AG04450 (cell line): ENCODE measurements at regions of chr17 and their contacts with region 1.

Region 1: GRCh38 chr17:75109407-75110233 is at the start of gene ARMC7:
- DNase-seq: peak; percentile 49
- H3K4me3 ChIP-seq: peak within 1 kb of the TSS; percentile 80
- H3K27ac ChIP-seq: no peak within 1 kb of the TSS
- H3K27me3 ChIP-seq: peaks cover 7% of the 10 kb centered on the region
- CTCF ChIP-seq: no peak
- polyA plus RNA-seq, gene ARMC7: 5.6 and 6.5 TPM in 2 replicates

Region 2: GRCh38 chr17:75059369-75060345 is 50.0 kb before region 1 on chr17:
- CTCF ChIA-PET with region 1: interaction called, 54 read pairs
- POLR2A ChIA-PET with region 1: interaction called, 6 read pairs
- DNase-seq: peak; percentile 54
- H3K4me3 ChIP-seq: no peak overlapping the region
- H3K27ac ChIP-seq: no peak overlapping the region
- H3K27me3 ChIP-seq: no peaks in the 10 kb centered on the region
- CTCF ChIP-seq: peak; percentile 65

Region 3: GRCh38 chr17:75077496-75078283 is 31.9 kb before region 1 on chr17:
- CTCF ChIA-PET with region 1: interaction called, 13 read pairs
- POLR2A ChIA-PET with region 1: interaction called, 5 read pairs
- DNase-seq: no peak
- H3K4me3 ChIP-seq: no peak overlapping the region
- H3K27ac ChIP-seq: no peak overlapping the region
- H3K27me3 ChIP-seq: no peaks in the 10 kb centered on the region
- CTCF ChIP-seq: peak; percentile 3; the same call in 1 of the 2 replicates

Region 4: DNA sequence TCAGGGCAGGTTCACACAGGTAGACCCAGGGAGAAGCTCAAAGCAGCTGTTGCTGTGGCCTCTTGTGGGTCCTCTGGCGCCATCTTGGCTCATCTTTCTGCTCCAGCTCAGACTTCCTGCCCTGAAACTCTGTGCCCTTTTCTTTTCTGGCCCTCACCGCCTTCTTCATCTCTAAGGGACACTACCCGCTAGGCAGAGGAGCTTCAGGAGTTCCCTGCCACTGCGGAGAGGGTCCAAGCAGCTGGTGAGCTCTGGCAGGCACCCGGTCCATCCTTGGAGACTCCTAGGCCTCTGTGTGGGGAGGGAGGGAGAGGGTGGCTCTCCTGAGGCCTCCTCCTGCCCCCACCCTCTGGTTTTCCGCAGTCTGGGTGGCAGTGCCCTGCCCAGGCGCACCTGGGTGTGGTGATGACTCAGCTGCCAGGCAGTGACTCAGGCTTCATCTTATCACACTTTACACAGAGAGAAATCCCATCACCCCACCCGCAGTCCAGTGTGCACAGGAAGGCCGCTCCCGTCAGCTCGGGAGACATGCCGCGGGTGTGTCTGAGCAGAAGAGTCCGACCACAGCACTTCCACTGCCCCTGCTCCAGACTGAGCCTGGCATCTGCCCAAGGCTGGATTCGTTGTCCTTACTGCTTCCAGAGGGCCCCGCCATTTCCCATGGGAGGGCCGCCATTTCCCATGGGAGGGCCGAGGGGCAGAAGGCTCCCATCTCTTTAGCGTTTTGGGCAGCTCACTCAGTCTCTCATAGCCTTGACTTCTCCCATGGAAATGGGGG is 14.6 kb after region 1 on chr17:
- CTCF ChIA-PET with region 1: interaction called, 67 read pairs
- POLR2A ChIA-PET with region 1: interaction called, 4 read pairs
- DNase-seq: no peak
- H3K4me3 ChIP-seq: no peak overlapping the region
- H3K27ac ChIP-seq: peak overlapping the region; percentile 11
- H3K27me3 ChIP-seq: no peaks in the 10 kb centered on the region
- CTCF ChIP-seq: no peak

Region 5: GRCh38 chr17:75151930-75152329 is 42.3 kb after region 1 on chr17:
- CTCF ChIA-PET with region 1: interaction called, 15 read pairs
- POLR2A ChIA-PET with region 1: interaction called, 7 read pairs
- DNase-seq: no peak
- H3K4me3 ChIP-seq: peak overlapping the region; percentile 94
- H3K27ac ChIP-seq: no peak overlapping the region
- H3K27me3 ChIP-seq: no peaks in the 10 kb centered on the region
- CTCF ChIP-seq: no peak

Region 6: DNA sequence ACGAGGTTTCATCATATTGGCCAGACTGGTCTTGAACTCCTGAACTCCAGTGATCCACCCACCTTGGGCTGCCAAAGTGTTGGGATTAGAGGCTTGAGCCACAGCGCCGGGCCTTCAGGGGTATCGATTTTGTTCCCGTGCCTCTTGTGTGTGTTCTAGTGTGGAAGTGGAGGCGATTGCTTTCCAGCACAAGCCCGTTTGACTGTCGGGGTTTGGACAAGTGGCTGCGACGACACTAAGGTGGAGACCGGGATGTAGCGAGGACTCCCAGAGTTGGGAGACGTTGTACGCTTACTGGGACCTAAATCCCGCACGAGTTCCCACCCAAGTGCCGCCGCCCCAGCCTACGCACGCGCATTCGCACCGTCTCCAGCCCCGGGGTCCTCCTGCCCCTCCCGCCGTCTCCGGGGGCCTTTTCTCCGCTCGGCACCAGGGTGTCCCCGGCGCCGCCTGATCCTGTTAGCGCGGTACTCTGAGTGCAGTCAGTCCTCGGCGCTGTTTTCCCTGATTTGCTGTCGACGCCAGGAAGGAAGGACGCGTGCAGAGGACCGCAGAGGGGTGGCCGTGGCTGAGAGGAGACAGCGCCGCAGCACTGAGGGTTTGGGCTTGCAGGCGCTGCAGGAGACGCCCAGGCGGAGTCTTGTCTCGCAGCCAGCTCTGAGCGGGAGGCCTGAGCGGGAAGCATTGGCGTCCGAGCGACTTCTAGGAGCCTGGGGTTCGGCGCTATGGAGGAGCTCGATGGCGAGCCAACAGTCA is 95.6 kb after region 1 on chr17 and contains the start of gene NUP85:
- CTCF ChIA-PET with region 1: interaction called, 154 read pairs
- POLR2A ChIA-PET with region 1: interaction called, 4 read pairs
- DNase-seq: peak; percentile 79
- H3K4me3 ChIP-seq: peak within 1 kb of the TSS; percentile 100
- H3K27ac ChIP-seq: peak within 1 kb of the TSS; percentile 99
- H3K27me3 ChIP-seq: no peaks in the 10 kb centered on the region
- CTCF ChIP-seq: no peak
- polyA plus RNA-seq, gene NUP85: 31.5 and 33.3 TPM in 2 replicates